Activated CD4-positive, alpha-beta T cell treated with anti-CD3 and anti-CD28 coated beads, Interleukin-2, amount 10 ng/mL, durations not matched to agents 7 days and 5 days (primary cell): ENCODE measurements at regions of chr2 and their contacts with region 1.

Region 1: GRCh38 chr2:224284134-224284946 is 117.6 kb downstream of the FAM124B start:
- DNase-seq: peak; percentile 22
- H3K4me3 Mint-ChIP-seq: no peak overlapping the region
- H3K27ac Mint-ChIP-seq: no peak overlapping the region
- H3K4me1 Mint-ChIP-seq: no peaks in the 10 kb centered on the region
- H3K27me3 Mint-ChIP-seq: peaks cover 24% of the 10 kb centered on the region

Region 2: GRCh38 chr2:223970343-223971128 is 313.8 kb before region 1 on chr2:
- CTCF ChIA-PET with region 1: interaction called, 35 read pairs
- POLR2A ChIA-PET with region 1: no interaction called
- DNase-seq: peak; percentile 72
- H3K4me3 Mint-ChIP-seq: no peak overlapping the region
- H3K27ac Mint-ChIP-seq: no peak overlapping the region
- H3K4me1 Mint-ChIP-seq: peaks cover 8% of the 10 kb centered on the region
- H3K27me3 Mint-ChIP-seq: no peaks in the 10 kb centered on the region

Region 3: DNA sequence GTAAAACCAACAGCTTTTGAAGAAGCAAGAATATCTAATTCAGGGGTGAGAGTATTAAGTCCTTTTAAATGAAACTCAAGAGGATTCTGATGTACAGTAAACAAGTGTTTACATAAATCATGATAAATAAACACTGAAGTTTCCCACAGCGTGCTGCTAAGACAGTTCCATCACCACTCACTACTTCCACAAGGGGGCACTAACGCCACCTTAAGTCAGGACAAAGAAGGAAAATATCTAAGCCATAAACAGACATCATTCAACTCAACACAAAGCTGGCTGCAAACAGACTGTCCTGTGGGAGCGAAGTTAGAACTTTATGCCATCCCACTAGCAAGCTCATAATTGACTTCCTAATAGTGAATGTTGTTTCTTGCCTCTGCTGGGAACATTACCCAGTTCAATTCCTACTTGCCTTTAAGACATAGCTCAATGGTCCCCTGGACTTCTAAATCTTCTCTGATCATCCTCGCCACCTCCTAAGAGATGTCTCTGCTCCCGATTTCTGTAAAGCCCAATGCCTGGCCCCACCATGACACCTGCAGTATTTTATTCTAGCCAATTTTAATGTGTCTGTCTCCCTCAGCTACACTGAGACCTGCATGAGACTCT is 290.6 kb before region 1 on chr2:
- CTCF ChIA-PET with region 1: interaction called, 17 read pairs
- POLR2A ChIA-PET with region 1: no interaction called
- DNase-seq: peak; percentile 75
- H3K4me3 Mint-ChIP-seq: no peak overlapping the region
- H3K27ac Mint-ChIP-seq: no peak overlapping the region
- H3K4me1 Mint-ChIP-seq: peaks cover 13% of the 10 kb centered on the region
- H3K27me3 Mint-ChIP-seq: no peaks in the 10 kb centered on the region

Region 4: DNA sequence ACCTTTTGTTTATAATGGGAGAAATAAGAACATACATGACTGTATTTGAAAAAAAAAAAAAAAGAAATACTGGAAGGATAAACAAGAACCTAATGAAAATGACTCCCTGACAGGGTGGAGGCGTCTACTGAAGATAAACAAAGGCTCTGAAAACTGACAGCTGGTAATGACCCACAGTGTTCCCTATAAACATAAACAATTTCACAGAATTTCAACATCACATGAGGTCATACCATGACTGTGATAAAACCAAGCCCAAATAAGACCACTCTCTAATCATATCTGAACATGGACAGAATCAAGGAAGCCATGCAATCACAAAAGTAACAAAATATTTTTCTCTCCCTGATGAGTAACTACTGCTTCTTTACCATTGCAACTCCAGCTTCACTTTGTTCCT is 41.8 kb before region 1 on chr2:
- CTCF ChIA-PET with region 1: no interaction called
- POLR2A ChIA-PET with region 1: no interaction called
- DNase-seq: no peak
- H3K4me3 Mint-ChIP-seq: no peak overlapping the region
- H3K27ac Mint-ChIP-seq: no peak overlapping the region
- H3K4me1 Mint-ChIP-seq: no peaks in the 10 kb centered on the region
- H3K27me3 Mint-ChIP-seq: peaks cover 8% of the 10 kb centered on the region

Region 5: GRCh38 chr2:224268441-224268840 is 15.9 kb before region 1 on chr2:
- CTCF ChIA-PET with region 1: no interaction called
- POLR2A ChIA-PET with region 1: no interaction called
- DNase-seq: no peak
- H3K4me3 Mint-ChIP-seq: no peak overlapping the region
- H3K27ac Mint-ChIP-seq: no peak overlapping the region
- H3K4me1 Mint-ChIP-seq: no peaks in the 10 kb centered on the region
- H3K27me3 Mint-ChIP-seq: peaks cover 18% of the 10 kb centered on the region

Region 6: GRCh38 chr2:224532931-224533330 is 248.6 kb after region 1 on chr2:
- CTCF ChIA-PET with region 1: no interaction called
- POLR2A ChIA-PET with region 1: no interaction called
- DNase-seq: no peak
- H3K4me3 Mint-ChIP-seq: no peak overlapping the region
- H3K27ac Mint-ChIP-seq: no peak overlapping the region
- H3K4me1 Mint-ChIP-seq: peaks cover 29% of the 10 kb centered on the region
- H3K27me3 Mint-ChIP-seq: no peaks in the 10 kb centered on the region